Activated T-helper 1 cell treated with anti-CD3 and anti-CD28 coated beads, Interleukin-12 subunit alpha, Interleukin-12 subunit beta, Interleukin-2, Interleukin-4 antibody, amounts not matched to agents 30 ng/mL and 10 ng/mL and 1 ng/mL, durations not matched to agents 14 hours and 24 hours and 36 hours (primary cell): ENCODE measurements at regions of chr10 and their contacts with region 1.

Region 1: GRCh38 chr10:27099916-27100812 is at the start of gene ANKRD26:
- DNase-seq: peak; percentile 96
- H3K4me3 Mint-ChIP-seq: peak within 1 kb of the TSS; percentile 86
- H3K27ac Mint-ChIP-seq: peak within 1 kb of the TSS; percentile 98
- H3K4me1 Mint-ChIP-seq: peaks cover 43% of the 10 kb centered on the region
- H3K27me3 Mint-ChIP-seq: no peaks in the 10 kb centered on the region
- total RNA-seq, gene ANKRD26: 4.3 and 7.0 TPM in 2 replicates

Region 2: GRCh38 chr10:26737730-26738129 is 362.4 kb before region 1 on chr10:
- intact Hi-C with region 1: loop called (anchors 1 kb)
- DNase-seq: peak; percentile 59
- H3K4me3 Mint-ChIP-seq: peak overlapping the region; percentile 45
- H3K27ac Mint-ChIP-seq: peak overlapping the region; percentile 99
- H3K4me1 Mint-ChIP-seq: peaks cover 74% of the 10 kb centered on the region
- H3K27me3 Mint-ChIP-seq: no peaks in the 10 kb centered on the region

Region 3: DNA sequence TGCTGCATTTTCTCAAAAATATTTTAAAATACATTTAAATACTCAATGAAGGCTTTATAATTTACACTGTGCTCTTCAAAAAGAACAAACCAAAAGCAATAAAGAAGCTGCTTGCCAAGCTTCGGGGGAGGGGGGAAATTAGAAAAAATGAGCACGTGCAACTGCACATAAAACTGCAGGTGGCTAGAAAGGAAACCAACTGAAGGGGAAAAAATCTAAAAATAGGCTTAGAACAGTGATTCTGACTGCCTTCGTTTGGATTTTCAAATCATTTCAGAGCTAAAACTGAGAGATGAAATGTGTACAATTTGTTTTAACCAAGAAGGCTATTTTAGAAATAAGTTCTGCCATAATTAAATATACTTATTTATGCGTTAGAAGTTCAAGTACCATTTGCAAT is 300.8 kb before region 1 on chr10:
- intact Hi-C with region 1: no loop called
- DNase-seq: no peak
- H3K4me3 Mint-ChIP-seq: no peak overlapping the region
- H3K27ac Mint-ChIP-seq: no peak overlapping the region
- H3K4me1 Mint-ChIP-seq: peaks cover 43% of the 10 kb centered on the region
- H3K27me3 Mint-ChIP-seq: no peaks in the 10 kb centered on the region

Region 4: GRCh38 chr10:26815500-26815899 is 284.7 kb before region 1 on chr10:
- intact Hi-C with region 1: no loop called
- DNase-seq: no peak
- H3K4me3 Mint-ChIP-seq: no peak overlapping the region
- H3K27ac Mint-ChIP-seq: no peak overlapping the region
- H3K4me1 Mint-ChIP-seq: peaks cover 24% of the 10 kb centered on the region
- H3K27me3 Mint-ChIP-seq: no peaks in the 10 kb centered on the region

Region 5: GRCh38 chr10:26890956-26891355 is 209.2 kb before region 1 on chr10:
- intact Hi-C with region 1: loop called (anchors 10 kb)
- DNase-seq: peak; percentile 22
- H3K4me3 Mint-ChIP-seq: no peak overlapping the region
- H3K27ac Mint-ChIP-seq: no peak overlapping the region
- H3K4me1 Mint-ChIP-seq: no peaks in the 10 kb centered on the region
- H3K27me3 Mint-ChIP-seq: peaks cover 8% of the 10 kb centered on the region

Region 6: DNA sequence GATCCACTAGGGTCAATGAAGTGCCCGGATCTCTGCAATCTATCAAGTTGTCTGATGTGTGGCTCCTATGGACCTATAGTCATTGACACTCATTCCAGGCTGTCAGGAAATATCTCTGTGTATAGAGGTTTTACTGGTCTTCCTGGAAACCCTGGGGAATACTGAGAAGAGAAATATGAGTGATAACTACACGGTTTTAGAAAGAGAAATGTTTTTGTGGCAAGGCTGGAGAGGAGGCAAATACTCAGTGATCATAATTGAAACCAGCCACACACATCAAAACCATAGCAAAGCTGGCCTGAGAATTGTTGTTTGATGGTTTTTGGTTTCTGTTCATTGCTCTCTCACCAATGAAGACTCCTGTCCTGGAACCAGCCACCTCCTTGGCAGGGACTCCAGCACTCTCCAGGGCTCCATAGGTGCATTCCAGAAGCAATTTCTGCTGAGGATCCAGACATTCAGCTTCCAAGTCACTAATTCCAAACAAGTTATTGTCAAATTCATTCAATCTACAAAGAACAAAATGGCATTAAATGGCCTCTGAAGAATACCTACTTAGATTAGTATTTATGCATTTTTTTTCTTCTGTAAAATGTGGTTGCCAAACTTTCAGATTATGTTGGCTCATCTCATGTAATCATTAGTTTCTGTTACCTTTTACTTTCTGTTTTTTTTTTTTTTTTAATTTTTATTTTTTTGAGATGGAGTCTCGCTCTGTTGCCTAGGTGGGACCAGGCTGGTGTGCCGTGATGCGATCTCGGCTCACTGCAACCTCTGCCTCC is 130.8 kb before region 1 on chr10:
- intact Hi-C with region 1: loop called (anchors 1 kb)
- DNase-seq: no peak
- H3K4me3 Mint-ChIP-seq: no peak overlapping the region
- H3K27ac Mint-ChIP-seq: peak overlapping the region; percentile 21
- H3K4me1 Mint-ChIP-seq: peaks cover 37% of the 10 kb centered on the region
- H3K27me3 Mint-ChIP-seq: no peaks in the 10 kb centered on the region

Region 7: GRCh38 chr10:27035163-27035562 is 65.0 kb before region 1 on chr10:
- intact Hi-C with region 1: loop called (anchors 5 kb)
- DNase-seq: no peak
- H3K4me3 Mint-ChIP-seq: peak overlapping the region; percentile 64
- H3K27ac Mint-ChIP-seq: peak overlapping the region; percentile 66
- H3K4me1 Mint-ChIP-seq: peaks cover 16% of the 10 kb centered on the region
- H3K27me3 Mint-ChIP-seq: no peaks in the 10 kb centered on the region

Region 8: DNA sequence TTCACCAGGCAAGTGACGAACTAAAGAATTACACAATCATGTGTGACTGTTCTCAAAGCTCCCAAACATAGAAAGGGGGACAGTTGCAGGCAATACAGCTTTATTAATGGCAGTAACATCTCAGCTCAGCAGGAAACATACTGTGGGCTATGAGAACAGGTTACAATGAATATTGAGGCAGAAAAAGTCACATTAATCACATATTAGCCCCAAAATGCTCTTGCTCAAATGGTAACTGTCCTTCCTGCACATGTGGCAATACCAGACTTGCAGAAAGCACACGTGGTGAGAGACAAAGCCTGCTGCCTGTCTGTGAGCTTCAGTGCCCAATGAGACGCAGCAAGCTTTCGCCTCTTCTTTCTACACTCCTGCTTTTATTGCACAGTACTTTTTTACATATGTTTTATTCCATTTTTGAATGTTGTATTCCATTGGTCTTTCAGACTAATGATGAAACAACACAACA is 245.3 kb after region 1 on chr10:
- intact Hi-C with region 1: loop called (anchors 5 kb)
- DNase-seq: no peak
- H3K4me3 Mint-ChIP-seq: no peak overlapping the region
- H3K27ac Mint-ChIP-seq: peak overlapping the region; percentile 49
- H3K4me1 Mint-ChIP-seq: peaks cover 23% of the 10 kb centered on the region
- H3K27me3 Mint-ChIP-seq: peaks cover 5% of the 10 kb centered on the region